ENCODE measurements at regions of chr19 and their contacts with region 1.

Region 1: DNA sequence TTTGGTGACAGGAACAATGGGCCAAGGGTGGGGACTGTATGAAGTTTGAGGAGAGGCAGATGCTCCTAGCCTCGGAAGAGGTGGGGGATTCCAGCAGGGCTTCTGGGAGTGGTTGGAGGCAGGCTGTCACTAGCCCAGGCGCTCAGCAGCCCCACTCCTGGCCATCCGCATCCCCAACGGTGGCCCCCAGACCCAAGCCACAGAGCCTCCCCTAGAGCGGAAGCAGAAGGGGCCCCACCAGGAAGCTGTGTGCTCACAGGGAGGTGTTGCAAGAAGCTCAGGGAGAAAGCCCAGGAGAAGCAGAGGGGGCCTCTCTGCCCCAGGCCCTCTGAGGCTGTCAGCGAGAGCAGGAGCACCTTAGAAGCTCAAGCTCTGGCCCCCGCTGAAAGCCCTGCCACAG is 8.3 kb downstream of the PRAM1 start:
- DNase-seq: peak; percentile 71 to 93 (median 92)
- H3K4me3 ChIP-seq: peak overlapping the region in 5 of 7 experiments; percentile 37 to 60 (median 46)
- H3K27ac ChIP-seq: peak overlapping the region; percentile 50 to 70
- H3K4me1 ChIP-seq: peaks cover 2 to 77% (median 49%) of the 10 kb centered on the region in 4 experiments
- H3K27me3 ChIP-seq: no peaks in the 10 kb centered on the region

Region 2: GRCh38 chr19:8505680-8506401 is 11.7 kb after region 1 on chr19:
- CTCF ChIA-PET with region 1: interaction called, 94 read pairs
- POLR2A ChIA-PET with region 1: interaction called, 4 read pairs
- DNase-seq: peak in 2 of 3 donors; percentile 55 to 60
- H3K4me3 ChIP-seq: peak overlapping the region; percentile 51 to 85 (median 68)
- H3K27ac ChIP-seq: no peak overlapping the region
- H3K4me1 ChIP-seq: peaks cover 14 to 63% (median 58%) of the 10 kb centered on the region in 4 experiments
- H3K27me3 ChIP-seq: no peaks in the 10 kb centered on the region

Measured in common myeloid progenitor, CD34-positive (primary cell).